H1 (cell line): ENCODE measurements at regions of chr6 and their contacts with region 1.

Region 1: GRCh38 chr6:53359072-53359842 is 10.5 kb upstream of the ELOVL5 start:
- DNase-seq: peak; percentile 89 to 96
- H3K4me3 ChIP-seq: peak overlapping the region; percentile 58 to 83 (median 68)
- H3K27ac ChIP-seq: peak overlapping the region; percentile 85; the same call in 1 of the 2 replicates
- H3K4me1 ChIP-seq: peaks cover 0 to 4% (median 2%) of the 10 kb centered on the region in 4 experiments; a peak in 3 of 7 replicates
- H3K27me3 ChIP-seq: no peaks in the 10 kb centered on the region; a peak in 2 of 7 replicates
- CTCF ChIP-seq: no peak
- EP300 ChIP-seq: peak in 1 of 2 experiments; percentile 66; a peak in 1 of 3 replicates
- POLR2A ChIP-seq: peak; percentile 49 to 80
- RAD21 ChIP-seq: no peak; a peak in 1 of 4 replicates

Region 2: GRCh38 chr6:53322188-53323029 is 36.8 kb before region 1 on chr6:
- CTCF ChIA-PET with region 1: no interaction called
- POLR2A ChIA-PET with region 1: no interaction called
- DNase-seq: no peak
- H3K4me3 ChIP-seq: no peak overlapping the region
- H3K27ac ChIP-seq: no peak overlapping the region
- H3K4me1 ChIP-seq: peaks cover 0 to 10% (median 5%) of the 10 kb centered on the region in 4 experiments
- H3K27me3 ChIP-seq: peaks cover 0 to 2% (median 0%) of the 10 kb centered on the region in 4 experiments; a peak in 1 of 7 replicates
- CTCF ChIP-seq: no peak
- EP300 ChIP-seq: no peak
- POLR2A ChIP-seq: no peak
- RAD21 ChIP-seq: no peak

Region 3: GRCh38 chr6:53348371-53349208 is 10.7 kb before region 1 on chr6 and contains the start of gene ELOVL5:
- CTCF ChIA-PET with region 1: interaction called, 4 read pairs
- POLR2A ChIA-PET with region 1: interaction called, 49 read pairs
- DNase-seq: peak; percentile 73 to 97
- H3K4me3 ChIP-seq: peak within 1 kb of the TSS; percentile 66 to 86 (median 83)
- H3K27ac ChIP-seq: peak within 1 kb of the TSS; percentile 59; the same call in 1 of the 2 replicates
- H3K4me1 ChIP-seq: peaks cover 0 to 9% (median 4%) of the 10 kb centered on the region in 4 experiments; a peak in 5 of 7 replicates
- H3K27me3 ChIP-seq: peaks cover 0 to 11% (median 7%) of the 10 kb centered on the region in 4 experiments; a peak in 4 of 7 replicates
- CTCF ChIP-seq: no peak
- EP300 ChIP-seq: no peak
- POLR2A ChIP-seq: peak in 1 of 2 experiments; percentile 60; a peak in 1 of 3 replicates
- RAD21 ChIP-seq: no peak
- total RNA-seq, gene ELOVL5: 151 and 156 TPM in 2 replicates